ENCODE measurements at regions of chr16 and their contacts with region 1.

Region 1: GRCh38 chr16:28943281-28943680 is 7.5 kb upstream of the NFATC2IP start:
- DNase-seq: no peak
- H3K4me3 Mint-ChIP-seq: no peak overlapping the region
- H3K27ac Mint-ChIP-seq: no peak overlapping the region
- H3K4me1 Mint-ChIP-seq: peaks cover 5% of the 10 kb centered on the region
- H3K27me3 Mint-ChIP-seq: no peaks in the 10 kb centered on the region

Region 2: DNA sequence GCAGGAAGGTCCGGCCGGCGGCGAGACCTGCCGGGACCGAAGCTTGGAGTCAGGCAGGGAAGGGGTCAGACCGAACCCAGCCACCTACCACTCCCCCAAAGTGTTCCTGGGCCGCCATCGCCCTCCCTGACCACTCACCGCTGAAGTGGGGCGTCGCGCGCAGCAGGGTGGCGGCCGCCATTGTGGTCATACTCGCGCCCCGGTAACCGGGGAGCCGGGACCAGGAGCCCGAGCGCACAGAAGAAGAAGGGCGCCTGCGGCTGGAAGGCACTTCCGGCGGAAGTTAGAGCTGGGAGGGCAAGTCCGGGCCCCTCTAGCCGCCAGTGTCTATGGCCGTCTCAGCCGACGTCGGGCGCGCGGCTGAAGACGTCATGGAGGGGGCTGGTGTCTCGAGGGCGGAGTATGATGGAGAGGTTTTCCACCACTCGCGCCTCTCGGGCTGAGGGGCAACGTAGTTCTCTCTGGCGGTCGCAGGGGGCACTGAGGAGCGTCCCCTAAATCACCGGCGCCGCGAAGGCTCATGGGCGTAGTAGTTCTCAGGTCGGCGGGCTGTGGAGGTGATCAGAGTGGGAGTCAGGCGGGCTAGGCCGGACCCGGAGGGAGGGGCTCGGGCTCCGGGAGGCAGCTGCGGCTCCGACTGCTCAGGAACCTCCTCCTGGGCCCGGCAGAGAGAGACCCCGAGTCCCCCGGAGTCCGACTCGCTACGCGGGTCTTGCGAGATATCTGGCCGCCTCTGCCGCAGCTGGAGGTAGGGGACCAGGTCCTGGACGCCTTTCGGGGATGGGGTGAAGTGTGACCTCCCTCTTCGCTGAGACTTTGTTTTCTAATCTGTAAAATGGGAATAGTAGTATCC is 97.0 kb before region 1 on chr16 and contains the start of gene TUFM:
- CTCF ChIA-PET with region 1: interaction called, 39 read pairs
- POLR2A ChIA-PET with region 1: no interaction called
- intact Hi-C with region 1: no loop called
- DNase-seq: peak; percentile 99
- H3K4me3 Mint-ChIP-seq: peak within 1 kb of the TSS; percentile 89
- H3K27ac Mint-ChIP-seq: peak within 1 kb of the TSS; percentile 94
- H3K4me1 Mint-ChIP-seq: peaks cover 24% of the 10 kb centered on the region
- H3K27me3 Mint-ChIP-seq: no peaks in the 10 kb centered on the region
- total RNA-seq, gene TUFM: 221 TPM

Region 3: DNA sequence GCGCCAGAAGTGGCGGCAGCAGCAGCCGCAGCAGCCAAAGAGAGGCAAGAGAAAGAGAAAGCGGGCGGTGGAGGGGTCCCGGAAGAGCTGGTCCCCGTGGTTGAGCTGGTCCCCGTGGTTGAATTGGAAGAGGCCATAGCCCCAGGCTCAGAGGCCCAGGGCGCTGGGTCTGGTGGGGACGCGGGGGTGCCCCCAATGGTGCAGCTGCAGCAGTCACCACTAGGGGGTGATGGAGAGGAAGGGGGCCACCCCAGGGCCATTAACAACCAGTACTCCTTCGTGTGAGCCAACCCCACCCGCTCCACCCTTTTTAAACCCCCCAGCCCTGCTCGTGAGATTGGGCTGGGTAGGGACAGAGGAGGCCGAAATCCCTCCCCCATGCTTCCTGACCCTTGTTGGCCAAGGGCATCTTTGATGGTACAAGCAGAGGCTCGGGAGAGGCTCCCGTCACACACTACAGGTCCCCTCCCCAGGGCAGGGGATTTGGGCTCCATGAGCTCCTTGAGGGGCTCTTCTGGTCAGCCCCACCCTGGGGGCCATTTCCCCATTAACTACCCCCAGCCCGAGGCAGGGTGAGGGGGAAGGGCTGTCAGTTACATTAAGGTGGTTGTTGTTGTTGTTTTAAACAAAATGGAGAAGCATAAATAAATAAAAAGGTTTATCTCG is 69.6 kb before region 1 on chr16:
- CTCF ChIA-PET with region 1: interaction called, 42 read pairs
- POLR2A ChIA-PET with region 1: no interaction called
- intact Hi-C with region 1: no loop called
- DNase-seq: peak; percentile 68
- H3K4me3 Mint-ChIP-seq: no peak overlapping the region
- H3K27ac Mint-ChIP-seq: no peak overlapping the region
- H3K4me1 Mint-ChIP-seq: peaks cover 4% of the 10 kb centered on the region
- H3K27me3 Mint-ChIP-seq: no peaks in the 10 kb centered on the region

Region 4: DNA sequence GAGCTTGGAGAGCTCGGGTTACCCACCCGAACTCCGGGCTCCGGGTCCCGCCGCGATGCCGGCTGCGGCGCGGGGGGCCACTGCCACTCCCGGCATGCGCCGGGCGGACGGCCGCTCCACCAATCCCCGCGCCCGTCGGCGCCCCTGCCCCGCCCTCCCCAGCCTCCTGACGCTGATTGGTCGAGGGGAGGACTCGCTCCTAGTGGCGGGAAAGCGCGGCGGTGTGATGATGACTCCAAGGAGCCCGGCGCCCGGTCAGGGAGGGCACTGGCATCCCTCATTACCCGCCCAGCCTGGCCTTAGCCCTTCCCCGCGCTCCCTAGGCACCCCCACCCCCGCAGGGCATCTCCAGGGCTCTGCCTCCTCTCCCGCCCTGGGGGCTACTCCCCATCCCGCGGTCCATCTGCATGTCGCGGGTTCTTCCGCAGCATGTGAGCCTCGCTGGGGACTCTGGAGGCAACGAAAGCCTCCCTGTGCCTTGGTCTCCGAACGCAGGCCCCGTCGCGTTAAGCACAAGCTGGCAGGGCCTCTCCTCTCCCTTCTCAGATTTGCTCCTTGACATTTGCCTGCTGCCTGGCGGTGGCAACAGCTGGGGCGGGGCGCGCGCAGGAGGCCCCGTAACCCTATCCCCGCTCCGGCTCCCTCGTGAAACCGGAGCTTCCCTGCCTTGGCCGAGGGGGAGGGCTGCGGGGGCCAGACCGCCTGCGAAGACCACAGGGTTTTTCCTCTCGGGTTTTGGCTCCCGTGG is 63.3 kb before region 1 on chr16:
- CTCF ChIA-PET with region 1: interaction called, 42 read pairs
- POLR2A ChIA-PET with region 1: no interaction called
- intact Hi-C with region 1: loop called (anchors 2 kb)
- DNase-seq: peak; percentile 96
- H3K4me3 Mint-ChIP-seq: peak overlapping the region; percentile 88
- H3K27ac Mint-ChIP-seq: peak overlapping the region; percentile 13
- H3K4me1 Mint-ChIP-seq: peaks cover 20% of the 10 kb centered on the region
- H3K27me3 Mint-ChIP-seq: peaks cover 7% of the 10 kb centered on the region

Region 5: DNA sequence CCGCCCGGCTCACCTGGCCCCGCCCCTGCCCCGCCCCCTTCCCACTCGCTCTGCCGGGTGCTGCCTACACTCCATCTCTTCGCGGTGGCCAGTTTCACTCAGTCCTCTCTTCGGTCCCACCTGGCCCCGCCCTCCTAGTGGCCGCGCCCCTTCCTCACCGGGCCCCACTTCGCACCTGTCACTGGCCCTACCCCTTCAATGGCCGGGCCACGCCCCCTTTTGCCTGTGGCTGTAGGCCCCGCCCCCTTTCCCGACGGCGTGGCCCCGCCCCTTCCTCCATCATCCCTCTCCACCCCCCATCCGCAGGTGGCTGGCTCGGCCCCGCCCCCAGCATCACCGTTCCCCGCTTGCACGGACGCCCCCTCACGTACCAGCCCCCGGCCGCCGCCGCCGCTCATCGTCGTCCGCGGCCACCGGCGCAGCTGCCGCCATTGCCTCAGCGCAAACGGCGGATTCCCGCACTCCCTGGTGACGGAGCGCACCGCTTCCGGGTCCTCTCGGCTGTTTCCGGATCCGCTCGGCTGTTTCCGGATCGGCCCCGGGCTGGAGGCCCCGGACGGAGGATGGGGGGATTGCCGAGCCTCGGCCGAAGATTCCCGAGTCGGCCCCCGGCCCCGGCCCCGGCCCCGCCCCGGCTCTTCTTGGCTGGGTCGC is 18.4 kb before region 1 on chr16 and contains the start of gene RABEP2:
- CTCF ChIA-PET with region 1: interaction called, 31 read pairs
- POLR2A ChIA-PET with region 1: interaction called, 3 read pairs
- intact Hi-C with region 1: no loop called
- DNase-seq: peak; percentile 97
- H3K4me3 Mint-ChIP-seq: peak within 1 kb of the TSS; percentile 94
- H3K27ac Mint-ChIP-seq: peak within 1 kb of the TSS; percentile 98
- H3K4me1 Mint-ChIP-seq: peaks cover 9% of the 10 kb centered on the region
- H3K27me3 Mint-ChIP-seq: no peaks in the 10 kb centered on the region
- total RNA-seq, gene RABEP2: 11.3 to 12.0 TPM

Region 6: GRCh38 chr16:28990375-28991040 is 47.2 kb after region 1 on chr16:
- CTCF ChIA-PET with region 1: no interaction called
- POLR2A ChIA-PET with region 1: no interaction called
- intact Hi-C with region 1: no loop called
- DNase-seq: peak; percentile 89
- H3K4me3 Mint-ChIP-seq: peak overlapping the region; percentile 69
- H3K27ac Mint-ChIP-seq: peak overlapping the region; percentile 98
- H3K4me1 Mint-ChIP-seq: peaks cover 50% of the 10 kb centered on the region
- H3K27me3 Mint-ChIP-seq: no peaks in the 10 kb centered on the region

Measured in activated CD4-positive, alpha-beta memory T cell treated with anti-CD3 and anti-CD28 coated beads for 36 hours (primary cell).